ENCODE measurements at regions of chr4 and their contacts with region 1.

Region 1: DNA sequence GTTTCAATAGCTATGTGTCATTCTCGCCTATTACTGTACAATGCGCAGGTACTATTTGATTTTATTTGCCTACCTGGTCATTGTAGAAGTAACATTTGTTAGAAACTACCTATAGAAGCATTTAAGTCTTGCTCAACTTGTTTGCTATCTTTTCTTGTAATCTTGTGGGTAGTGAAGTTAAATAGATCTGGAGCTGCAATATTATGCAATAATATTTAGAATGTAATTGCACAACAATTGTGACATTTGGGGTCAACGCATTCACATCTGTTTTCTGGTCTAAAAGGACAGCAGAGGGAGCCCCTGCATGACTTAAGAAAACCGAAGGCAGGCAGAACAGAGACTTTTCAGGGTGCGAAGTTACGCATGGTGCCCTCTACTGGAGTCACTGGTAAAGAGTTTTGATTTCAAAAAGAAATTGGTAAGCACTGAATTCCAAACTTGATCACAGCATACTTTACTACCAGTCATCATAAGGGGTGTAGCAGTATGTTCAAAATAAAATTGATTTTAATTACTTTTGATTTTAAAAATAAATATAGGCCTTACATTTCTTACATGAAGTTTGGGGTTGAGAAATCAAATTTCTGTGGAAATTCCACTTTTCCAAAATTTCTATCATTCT is 503.2 kb upstream of the FAM241A start:
- DNase-seq: peak; percentile 63
- ATAC-seq: peak; percentile 78
- H3K4me3 ChIP-seq: no peak overlapping the region
- H3K27ac ChIP-seq: no peak overlapping the region
- H3K4me1 ChIP-seq: no peaks in the 10 kb centered on the region
- H3K27me3 ChIP-seq: no peaks in the 10 kb centered on the region
- CTCF ChIP-seq: peak; percentile 86

Region 2: DNA sequence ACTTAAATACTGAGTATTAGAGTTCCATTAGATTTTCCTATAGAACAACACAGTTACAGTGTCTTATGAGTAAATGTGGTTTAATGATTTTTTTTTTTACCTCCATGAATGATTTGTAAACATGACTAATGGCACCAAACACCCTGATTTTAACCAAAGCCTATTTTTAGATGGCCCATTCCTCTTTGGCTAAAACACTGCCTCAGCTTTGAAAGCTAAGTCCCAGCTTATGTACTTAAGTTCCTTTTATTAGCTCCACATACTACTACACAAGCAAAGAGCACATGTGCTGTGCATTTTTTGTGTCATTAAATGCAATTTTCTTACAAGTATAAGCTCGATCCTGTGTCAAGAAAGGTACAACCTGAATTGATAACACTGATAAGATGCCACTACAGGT is 443.6 kb before region 1 on chr4:
- CTCF ChIA-PET with region 1: no interaction called
- POLR2A ChIA-PET with region 1: no interaction called
- in situ Hi-C with region 1: no loop called
- intact Hi-C with region 1: no loop called
- DNase-seq: no peak
- ATAC-seq: no peak
- H3K4me3 ChIP-seq: no peak overlapping the region
- H3K27ac ChIP-seq: no peak overlapping the region
- H3K4me1 ChIP-seq: no peaks in the 10 kb centered on the region
- H3K27me3 ChIP-seq: no peaks in the 10 kb centered on the region
- CTCF ChIP-seq: no peak

Region 3: GRCh38 chr4:111854494-111855087 is 212.5 kb after region 1 on chr4:
- CTCF ChIA-PET with region 1: no interaction called
- POLR2A ChIA-PET with region 1: no interaction called
- in situ Hi-C with region 1: no loop called
- intact Hi-C with region 1: loop called (anchors 1 kb)
- DNase-seq: peak; percentile 8
- ATAC-seq: no peak
- H3K4me3 ChIP-seq: no peak overlapping the region
- H3K27ac ChIP-seq: no peak overlapping the region
- H3K4me1 ChIP-seq: no peaks in the 10 kb centered on the region
- H3K27me3 ChIP-seq: no peaks in the 10 kb centered on the region
- CTCF ChIP-seq: peak; percentile 61; the same call in 1 of the 2 replicates

Region 4: DNA sequence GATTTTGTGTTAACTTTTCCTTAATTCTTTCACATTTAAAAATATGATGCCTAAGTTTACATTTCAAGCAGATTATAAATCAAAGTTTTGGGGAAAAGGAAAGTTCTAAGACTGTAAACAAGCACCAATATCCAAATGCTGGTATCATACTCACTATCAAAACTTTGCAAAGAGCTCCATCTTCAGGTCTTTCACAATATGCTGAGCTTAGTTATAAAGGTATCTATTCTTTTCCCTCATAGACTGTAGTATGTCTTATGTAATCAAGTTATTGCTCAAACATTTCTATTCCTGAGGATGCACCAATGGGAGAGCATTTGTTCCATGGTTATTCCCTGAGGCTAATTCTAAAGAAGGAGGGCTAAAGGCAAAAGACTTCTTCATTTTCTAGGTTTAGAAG is 295.3 kb after region 1 on chr4:
- CTCF ChIA-PET with region 1: no interaction called
- POLR2A ChIA-PET with region 1: no interaction called
- in situ Hi-C with region 1: no loop called
- intact Hi-C with region 1: loop called (anchors 5 kb)
- DNase-seq: no peak
- ATAC-seq: peak; percentile 85
- H3K4me3 ChIP-seq: no peak overlapping the region
- H3K27ac ChIP-seq: no peak overlapping the region
- H3K4me1 ChIP-seq: no peaks in the 10 kb centered on the region
- H3K27me3 ChIP-seq: no peaks in the 10 kb centered on the region
- CTCF ChIP-seq: peak; percentile 38; the same call in 1 of the 2 replicates

Measured in Panc1 (cell line).